CD14-positive monocyte (primary cell): ENCODE measurements at regions of chr5 and their contacts with region 1.

Region 1: GRCh38 chr5:138575194-138576015 is at the start of gene HSPA9:
- DNase-seq: peak; percentile 99 to 100 (median 99)
- H3K4me3 ChIP-seq: peak within 1 kb of the TSS; percentile 89 to 95 (median 94)
- H3K4me3 Mint-ChIP-seq: peak within 1 kb of the TSS; percentile 89 to 94
- H3K27ac ChIP-seq: peak within 1 kb of the TSS; percentile 97 to 99
- H3K27ac Mint-ChIP-seq: peak within 1 kb of the TSS; percentile 99 to 100 (median 100)
- H3K4me1 ChIP-seq: peaks cover 15 to 19% of the 10 kb centered on the region in 2 donors
- H3K4me1 Mint-ChIP-seq: peaks cover 17% of the 10 kb centered on the region
- H3K27me3 ChIP-seq: no peaks in the 10 kb centered on the region
- H3K27me3 Mint-ChIP-seq: no peaks in the 10 kb centered on the region
- CTCF ChIP-seq: no peak
- polyA plus RNA-seq, gene HSPA9: 67.8 to 82.4 (median 81.8) TPM

Region 2: GRCh38 chr5:137708796-137709559 is 866.4 kb before region 1 on chr5:
- intact Hi-C with region 1: no loop called
- DNase-seq: no peak
- H3K4me3 ChIP-seq: no peak overlapping the region
- H3K4me3 Mint-ChIP-seq: no peak overlapping the region
- H3K27ac ChIP-seq: no peak overlapping the region
- H3K27ac Mint-ChIP-seq: no peak overlapping the region
- H3K4me1 ChIP-seq: no peaks in the 10 kb centered on the region
- H3K4me1 Mint-ChIP-seq: no peaks in the 10 kb centered on the region
- H3K27me3 ChIP-seq: no peaks in the 10 kb centered on the region
- H3K27me3 Mint-ChIP-seq: peaks cover 0 to 3% (median 0%) of the 10 kb centered on the region in 3 donors
- CTCF ChIP-seq: no peak

Region 3: GRCh38 chr5:138504799-138505198 is 70.6 kb before region 1 on chr5:
- intact Hi-C with region 1: no loop called
- DNase-seq: no peak
- H3K4me3 ChIP-seq: no peak overlapping the region
- H3K4me3 Mint-ChIP-seq: no peak overlapping the region
- H3K27ac ChIP-seq: no peak overlapping the region
- H3K27ac Mint-ChIP-seq: peak overlapping the region in 3 of 7 donors; percentile 2 to 26 (median 23)
- H3K4me1 ChIP-seq: peaks cover 3 to 7% of the 10 kb centered on the region in 2 donors
- H3K4me1 Mint-ChIP-seq: peaks cover 14% of the 10 kb centered on the region
- H3K27me3 ChIP-seq: no peaks in the 10 kb centered on the region
- H3K27me3 Mint-ChIP-seq: peaks cover 0 to 4% (median 0%) of the 10 kb centered on the region in 3 donors
- CTCF ChIP-seq: no peak

Region 4: DNA sequence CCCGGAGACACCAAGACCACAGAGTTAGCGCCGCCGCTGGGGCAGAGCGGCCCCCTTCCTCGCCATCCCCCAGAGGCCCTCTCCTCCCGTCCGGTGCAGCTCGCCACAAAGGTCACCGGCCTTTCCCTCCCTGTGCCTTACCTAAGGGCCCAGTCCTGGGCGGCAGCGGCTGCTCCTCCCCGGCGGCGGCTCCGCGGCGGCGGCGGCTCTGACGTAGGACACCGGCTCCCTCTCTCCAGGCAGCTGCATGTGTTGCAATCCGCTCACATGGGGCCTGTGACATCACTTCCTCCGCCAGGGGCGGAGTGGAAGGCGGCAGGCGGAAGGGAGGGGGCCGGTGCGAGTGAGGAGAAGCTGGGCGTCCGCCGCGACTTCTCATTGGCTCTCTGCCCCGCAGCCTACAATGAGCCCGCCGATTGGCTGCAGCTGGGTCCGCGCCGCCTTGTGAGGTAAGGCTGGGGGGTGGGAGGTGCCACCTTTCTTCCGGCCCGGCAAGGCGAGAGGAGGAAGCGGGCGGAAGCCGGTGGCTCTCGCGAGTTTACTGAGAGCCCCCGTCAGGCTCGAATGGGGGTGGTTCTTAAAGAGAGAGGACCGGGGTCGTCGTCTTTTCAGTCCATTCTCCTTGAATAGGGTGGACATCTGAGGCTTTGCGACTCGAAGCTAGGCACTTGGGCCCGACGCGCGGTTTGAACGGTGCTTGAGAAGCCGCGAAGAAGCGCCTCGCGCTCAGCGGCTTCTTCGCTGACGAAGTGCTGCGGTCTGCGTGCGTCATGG is 32.3 kb before region 1 on chr5 and contains the start of gene ETF1:
- intact Hi-C with region 1: loop called (anchors 2 kb)
- DNase-seq: peak; percentile 100
- H3K4me3 ChIP-seq: peak within 1 kb of the TSS; percentile 82 to 99 (median 98)
- H3K4me3 Mint-ChIP-seq: peak within 1 kb of the TSS; percentile 98 to 100
- H3K27ac ChIP-seq: peak within 1 kb of the TSS; percentile 96 to 100
- H3K27ac Mint-ChIP-seq: peak within 1 kb of the TSS; percentile 99 to 100 (median 100)
- H3K4me1 ChIP-seq: peaks cover 49 to 55% of the 10 kb centered on the region in 2 donors
- H3K4me1 Mint-ChIP-seq: peaks cover 61% of the 10 kb centered on the region
- H3K27me3 ChIP-seq: no peaks in the 10 kb centered on the region
- H3K27me3 Mint-ChIP-seq: no peaks in the 10 kb centered on the region
- CTCF ChIP-seq: no peak
- polyA plus RNA-seq, gene ETF1: 34.8 to 71.4 (median 61.6) TPM

Region 5: DNA sequence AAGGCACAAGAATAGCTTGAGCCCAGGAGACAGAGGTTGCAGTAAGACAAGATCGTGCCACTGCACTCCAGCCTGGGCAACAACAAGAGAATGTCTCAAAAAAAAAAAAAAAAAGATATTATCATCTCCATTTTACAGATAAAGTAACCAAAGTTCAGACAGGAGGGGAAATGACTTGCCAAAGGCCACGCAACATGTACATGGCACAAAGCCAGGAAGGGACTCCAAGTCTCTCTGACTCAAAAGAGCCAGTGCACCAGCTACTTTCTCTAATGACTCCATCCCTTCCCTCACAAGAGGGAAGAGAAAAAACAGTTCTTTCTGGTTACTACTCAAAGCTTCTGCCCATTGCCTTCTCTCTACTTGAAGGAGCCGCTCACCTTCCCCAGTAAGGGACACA is 588.6 kb after region 1 on chr5:
- intact Hi-C with region 1: no loop called
- DNase-seq: peak; percentile 67 to 71 (median 68)
- H3K4me3 ChIP-seq: no peak overlapping the region
- H3K4me3 Mint-ChIP-seq: no peak overlapping the region
- H3K27ac ChIP-seq: peak overlapping the region in 1 of 2 donors; percentile 24
- H3K27ac Mint-ChIP-seq: peak overlapping the region in 5 of 7 donors; percentile 63 to 85 (median 71)
- H3K4me1 ChIP-seq: peaks cover 15 to 21% of the 10 kb centered on the region in 2 donors
- H3K4me1 Mint-ChIP-seq: peaks cover 37% of the 10 kb centered on the region
- H3K27me3 ChIP-seq: no peaks in the 10 kb centered on the region
- H3K27me3 Mint-ChIP-seq: peaks cover 0 to 2% (median 1%) of the 10 kb centered on the region in 3 donors
- CTCF ChIP-seq: no peak

Region 6: DNA sequence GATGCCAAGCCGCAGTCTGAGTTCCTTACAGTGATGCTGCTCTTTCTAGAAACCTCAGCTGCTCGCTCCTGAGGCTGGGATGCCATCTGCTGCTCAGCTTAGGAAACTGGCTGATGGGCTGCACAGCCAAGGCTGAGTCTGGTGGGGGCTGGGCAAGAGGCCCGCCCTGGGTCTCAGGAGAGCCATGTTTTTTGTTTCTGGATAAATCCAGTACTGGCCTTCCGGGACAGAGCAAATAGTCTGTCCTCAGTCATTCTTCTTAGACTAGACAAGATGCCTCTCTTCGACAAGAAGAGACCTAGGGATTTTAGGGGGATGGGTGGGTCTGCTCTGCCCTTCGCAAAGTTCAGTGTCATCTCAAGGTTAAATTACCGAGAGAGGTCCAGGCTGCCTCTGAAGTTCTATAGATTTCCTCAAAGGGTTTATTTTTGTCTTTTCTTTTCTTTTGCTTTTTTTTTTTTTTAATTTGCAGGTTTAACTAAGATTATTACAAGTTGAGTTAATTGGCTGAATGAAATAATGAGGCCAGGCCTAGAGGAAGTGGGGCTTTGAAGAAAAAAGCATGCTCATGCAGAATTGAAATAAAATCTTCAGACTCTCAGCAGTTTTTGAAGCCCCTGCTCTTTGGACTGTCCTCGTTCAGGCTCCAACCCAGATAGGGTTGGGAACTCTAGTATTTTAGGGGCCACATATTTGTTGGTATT is 687.5 kb after region 1 on chr5:
- intact Hi-C with region 1: loop called in 1 of 2 experiments (anchors 10 kb)
- DNase-seq: peak; percentile 73 to 84 (median 80)
- H3K4me3 ChIP-seq: no peak overlapping the region
- H3K4me3 Mint-ChIP-seq: no peak overlapping the region
- H3K27ac ChIP-seq: no peak overlapping the region
- H3K27ac Mint-ChIP-seq: no peak overlapping the region
- H3K4me1 ChIP-seq: no peaks in the 10 kb centered on the region
- H3K4me1 Mint-ChIP-seq: peaks cover 3% of the 10 kb centered on the region
- H3K27me3 ChIP-seq: no peaks in the 10 kb centered on the region
- H3K27me3 Mint-ChIP-seq: peaks cover 2 to 6% (median 3%) of the 10 kb centered on the region in 3 donors
- CTCF ChIP-seq: peak; percentile 89

Region 7: DNA sequence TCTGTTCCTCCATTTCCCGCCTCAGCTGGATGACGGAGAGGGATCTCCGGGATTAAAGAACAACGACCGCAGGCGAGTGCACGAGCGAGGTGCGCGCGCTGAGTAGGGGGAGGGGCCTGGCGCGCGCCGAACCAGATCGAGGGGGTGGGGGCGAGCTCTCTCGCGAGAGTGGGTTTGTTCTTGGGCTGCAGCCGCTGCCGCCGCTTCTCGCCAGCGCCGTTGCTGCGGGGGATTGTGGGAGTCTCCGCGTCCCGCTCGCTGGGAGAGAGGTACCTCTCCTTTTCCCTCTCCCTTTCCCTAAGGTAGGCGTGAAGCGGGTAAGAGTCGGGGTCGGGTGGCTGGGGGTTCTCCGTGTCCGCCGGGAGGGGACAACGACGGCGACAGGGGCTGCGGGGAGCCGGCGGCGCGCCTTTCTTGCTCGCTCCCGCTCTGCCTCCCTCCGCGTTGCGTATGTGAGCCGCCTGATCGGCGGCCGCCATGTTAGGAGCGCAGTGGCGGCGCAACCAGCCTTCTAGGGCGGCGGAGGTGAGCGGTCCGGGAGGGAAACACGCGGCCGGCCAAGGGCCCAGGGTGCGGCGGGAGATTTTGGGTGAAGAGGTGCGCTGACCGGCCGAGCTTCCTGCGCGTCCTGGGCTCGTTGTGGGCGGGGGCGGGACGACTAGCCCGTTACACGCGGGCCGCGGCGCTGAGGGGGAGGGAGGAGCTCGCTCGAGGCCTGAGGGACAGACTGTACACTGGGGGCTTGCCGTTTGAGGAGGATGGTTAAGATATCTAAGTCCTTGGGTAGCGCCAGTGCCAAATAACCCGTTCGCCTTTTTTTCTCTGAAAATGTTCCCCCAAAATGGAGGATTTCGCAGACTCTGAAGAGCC is 718.3 kb after region 1 on chr5 and contains the start of gene MATR3:
- intact Hi-C with region 1: loop called in 1 of 2 experiments (anchors 10 kb)
- DNase-seq: peak; percentile 93 to 96 (median 94)
- H3K4me3 ChIP-seq: peak within 1 kb of the TSS; percentile 70 to 93 (median 91)
- H3K4me3 Mint-ChIP-seq: peak within 1 kb of the TSS; percentile 95 to 96
- H3K27ac ChIP-seq: peak within 1 kb of the TSS; percentile 91 to 96
- H3K27ac Mint-ChIP-seq: peak within 1 kb of the TSS; percentile 97 to 99 (median 98)
- H3K4me1 ChIP-seq: peaks cover 18 to 32% of the 10 kb centered on the region in 2 donors
- H3K4me1 Mint-ChIP-seq: peaks cover 39% of the 10 kb centered on the region
- H3K27me3 ChIP-seq: no peaks in the 10 kb centered on the region
- H3K27me3 Mint-ChIP-seq: no peaks in the 10 kb centered on the region
- CTCF ChIP-seq: no peak
- polyA plus RNA-seq, gene MATR3: 61.8 to 174 (median 137) TPM

Region 8: DNA sequence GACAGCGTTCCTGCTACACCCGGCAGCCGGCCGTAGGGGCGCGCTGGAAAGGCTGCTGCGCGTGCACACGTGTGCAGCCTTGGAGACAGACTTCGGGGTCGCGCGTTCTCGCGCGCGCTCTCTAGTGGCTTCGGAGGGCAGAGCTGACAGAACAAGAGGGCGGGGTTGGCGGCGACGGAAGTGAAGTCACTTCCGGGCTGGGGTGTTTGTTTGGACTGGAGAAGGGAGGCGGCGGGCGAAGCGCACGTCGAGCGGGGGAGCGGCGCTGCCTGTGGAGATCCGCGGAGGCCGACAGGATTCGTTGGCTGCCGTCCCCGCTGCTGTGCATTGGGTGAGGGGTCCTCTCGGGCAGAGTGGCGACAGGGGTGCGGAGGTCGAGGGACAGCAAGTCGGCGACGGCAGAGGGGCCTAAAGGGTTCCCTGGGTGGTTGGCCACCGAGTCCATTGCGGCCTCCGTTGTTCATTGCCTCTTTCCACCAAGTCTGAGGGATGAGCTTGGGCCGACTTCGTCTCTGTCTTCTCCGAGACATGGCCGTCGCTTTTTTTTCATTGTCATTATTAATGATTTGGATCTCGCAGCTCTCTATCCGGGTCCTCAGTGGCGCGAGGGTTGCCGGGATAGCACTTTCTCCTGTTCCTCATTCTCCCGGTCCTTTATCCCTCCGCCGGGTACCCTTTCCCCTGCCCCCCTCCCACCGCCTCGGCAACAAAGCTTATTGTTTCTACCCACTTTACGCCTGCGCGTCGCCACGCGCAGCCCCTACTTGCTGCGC is 766.4 kb after region 1 on chr5 and contains the start of gene PAIP2:
- intact Hi-C with region 1: loop called in 1 of 2 experiments (anchors 5 kb)
- DNase-seq: peak; percentile 93 to 97 (median 97)
- H3K4me3 ChIP-seq: peak within 1 kb of the TSS; percentile 74 to 89 (median 87)
- H3K4me3 Mint-ChIP-seq: peak within 1 kb of the TSS; percentile 97 to 99
- H3K27ac ChIP-seq: peak within 1 kb of the TSS; percentile 96 to 99
- H3K27ac Mint-ChIP-seq: peak within 1 kb of the TSS; percentile 94 to 100 (median 99)
- H3K4me1 ChIP-seq: peaks cover 21 to 31% of the 10 kb centered on the region in 2 donors
- H3K4me1 Mint-ChIP-seq: peaks cover 33% of the 10 kb centered on the region
- H3K27me3 ChIP-seq: no peaks in the 10 kb centered on the region
- H3K27me3 Mint-ChIP-seq: peaks cover 5 to 7% (median 6%) of the 10 kb centered on the region in 3 donors
- CTCF ChIP-seq: peak; percentile 65
- polyA plus RNA-seq, gene PAIP2: 68.3 to 325 (median 313) TPM